ENCODE measurements at regions of chr7 and their contacts with region 1.

Region 1: DNA sequence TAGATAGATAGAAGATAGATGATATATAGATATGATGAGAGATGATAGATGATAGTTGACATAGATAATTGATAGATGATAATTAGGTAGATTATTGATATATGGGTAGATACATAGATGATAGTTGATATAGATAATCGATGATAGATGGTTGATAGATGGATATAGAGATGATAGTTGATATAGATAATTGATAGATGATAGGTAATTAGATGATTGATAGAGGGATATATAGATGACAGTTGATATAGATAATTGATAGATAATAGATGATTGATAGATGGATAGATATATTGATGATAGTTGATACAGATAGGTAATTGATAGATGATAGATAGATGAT is 72.3 kb downstream of the PRR15 start:
- DNase-seq: no peak
- H3K4me3 ChIP-seq: no peak overlapping the region
- CTCF ChIP-seq: no peak

Region 2: GRCh38 chr7:29587195-29587808 is 48.7 kb before region 1 on chr7:
- CTCF ChIA-PET with region 1: no interaction called
- POLR2A ChIA-PET with region 1: no interaction called
- DNase-seq: no peak
- H3K4me3 ChIP-seq: no peak overlapping the region
- CTCF ChIP-seq: no peak

Region 3: GRCh38 chr7:29622335-29623265 is 13.4 kb before region 1 on chr7:
- CTCF ChIA-PET with region 1: interaction called, 26 read pairs
- POLR2A ChIA-PET with region 1: no interaction called
- DNase-seq: peak; percentile 90
- H3K4me3 ChIP-seq: no peak overlapping the region
- CTCF ChIP-seq: no peak